Vagina (tissue), 2 donors: ENCODE measurements at regions of chr3 and their contacts with region 1.

Region 1: GRCh38 chr3:58008140-58009025 is at the start of gene FLNB:
- DNase-seq: no peak
- H3K4me3 ChIP-seq: peak within 1 kb of the TSS; percentile 70 to 78
- H3K27ac ChIP-seq: peak within 1 kb of the TSS; percentile 74
- H3K4me1 ChIP-seq: peaks cover 45% of the 10 kb centered on the region
- H3K27me3 ChIP-seq: no peaks in the 10 kb centered on the region
- CTCF ChIP-seq: peak; percentile 29 to 90 (median 70)
- POLR2A ChIP-seq: peak in 1 of 2 donors; percentile 36
- total RNA-seq, gene FLNB: 147 TPM

Region 2: DNA sequence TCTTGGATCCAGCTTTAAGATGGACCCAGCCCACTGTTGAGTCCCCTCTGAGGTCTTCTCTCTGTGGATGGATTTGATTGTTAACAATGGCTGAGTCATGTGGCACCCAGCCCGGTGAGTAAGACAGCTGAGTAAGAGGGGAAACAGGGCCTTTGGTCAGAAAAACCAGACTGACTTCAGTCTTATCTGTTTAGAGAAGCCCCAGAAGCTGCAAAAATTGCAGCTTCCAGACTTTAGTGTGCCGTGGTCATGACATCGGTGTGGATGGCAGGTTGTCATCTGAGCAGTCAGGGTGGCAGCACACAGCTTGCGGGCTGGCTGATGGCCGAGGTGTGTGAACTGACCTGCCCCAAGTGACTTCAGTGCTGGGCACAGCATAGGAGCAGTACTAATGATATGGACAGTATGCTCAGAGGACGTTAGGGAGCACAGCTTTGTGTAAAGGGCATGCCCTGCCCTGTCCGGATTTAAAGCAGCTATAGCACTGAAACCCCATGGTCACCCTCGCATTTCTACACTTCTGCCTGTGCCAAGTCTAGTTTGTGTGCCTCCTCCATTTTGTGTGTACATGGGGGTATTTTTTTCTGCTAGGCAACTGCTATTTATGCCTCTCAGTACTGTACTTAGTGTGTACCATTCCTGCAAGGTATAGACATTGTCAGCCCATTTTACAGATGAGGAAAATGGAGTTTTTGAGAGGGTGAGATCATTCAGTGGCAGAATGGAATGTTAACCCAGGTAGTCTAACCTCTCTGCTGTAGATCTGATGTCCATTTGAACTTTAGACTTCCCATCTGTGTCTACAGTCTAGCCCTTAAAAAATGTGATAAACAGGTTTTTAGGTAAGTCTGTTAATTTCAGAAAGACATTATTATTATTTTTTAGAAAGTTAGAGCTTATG is 44.2 kb after region 1 on chr3:
- intact Hi-C with region 1: loop called (anchors 5 kb)
- DNase-seq: no peak
- H3K4me3 ChIP-seq: no peak overlapping the region
- H3K27ac ChIP-seq: peak overlapping the region; percentile 78
- H3K4me1 ChIP-seq: peaks cover 59% of the 10 kb centered on the region
- H3K27me3 ChIP-seq: no peaks in the 10 kb centered on the region
- CTCF ChIP-seq: no peak
- POLR2A ChIP-seq: no peak

Region 3: DNA sequence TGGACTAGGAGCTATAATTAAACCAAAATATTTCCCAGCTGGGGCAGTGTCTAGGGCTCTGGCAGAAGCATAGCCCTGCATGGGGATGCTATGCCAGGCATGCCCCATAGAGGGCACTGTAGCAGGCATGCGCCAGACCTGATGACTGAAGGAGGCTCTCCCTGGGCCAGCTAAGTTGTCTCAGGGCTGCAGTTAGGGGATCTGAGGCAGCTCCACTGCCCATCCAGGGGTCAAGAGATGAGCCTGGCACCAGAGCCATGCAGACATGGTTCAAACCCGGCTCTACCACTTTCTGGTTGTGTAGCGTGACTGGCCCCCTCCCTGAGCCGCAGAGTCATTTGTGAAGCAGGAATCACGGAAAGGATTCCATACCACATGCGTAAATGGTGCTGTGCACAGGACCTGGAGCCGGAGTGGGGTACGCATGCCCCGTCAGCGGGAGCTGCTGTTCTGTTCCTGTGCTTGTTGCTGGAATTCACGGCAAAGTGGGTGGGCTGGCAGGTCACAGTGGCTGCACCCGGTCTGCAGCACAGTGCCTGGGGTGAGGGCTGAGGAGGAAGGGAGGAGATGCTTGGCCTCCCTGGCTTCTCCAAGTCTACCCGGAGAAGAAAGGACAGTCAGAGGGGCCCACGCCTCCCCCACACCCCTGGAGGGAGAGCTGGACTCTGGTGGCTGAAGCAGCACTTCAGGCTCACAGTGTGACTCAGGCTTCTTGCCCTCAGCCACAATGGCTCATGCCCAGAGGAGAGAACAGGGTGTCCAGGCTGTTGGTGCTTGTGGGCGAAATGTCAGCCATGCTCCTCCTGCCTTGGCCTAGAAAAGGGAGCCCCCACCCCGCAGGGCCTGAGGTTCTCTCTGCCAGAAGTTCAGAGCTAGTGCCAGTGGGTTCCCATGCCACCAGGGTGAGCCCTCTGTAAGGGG is 159.3 kb after region 1 on chr3:
- intact Hi-C with region 1: loop called (anchors 5 kb)
- DNase-seq: no peak
- H3K4me3 ChIP-seq: no peak overlapping the region
- H3K27ac ChIP-seq: no peak overlapping the region
- H3K4me1 ChIP-seq: no peaks in the 10 kb centered on the region
- H3K27me3 ChIP-seq: no peaks in the 10 kb centered on the region
- CTCF ChIP-seq: peak; percentile 6 to 50 (median 36)
- POLR2A ChIP-seq: no peak

Region 4: GRCh38 chr3:59262076-59262498 is 1253.7 kb after region 1 on chr3:
- intact Hi-C with region 1: no loop called
- DNase-seq: no peak
- H3K4me3 ChIP-seq: no peak overlapping the region
- H3K27ac ChIP-seq: no peak overlapping the region
- H3K4me1 ChIP-seq: no peaks in the 10 kb centered on the region
- H3K27me3 ChIP-seq: no peaks in the 10 kb centered on the region
- CTCF ChIP-seq: no peak
- POLR2A ChIP-seq: no peak